ENCODE measurements at regions of chr2 and their contacts with region 1.

Region 1: GRCh38 chr2:68467077-68467960 is at the starts of genes APLF and FBXO48:
- DNase-seq: peak; percentile 98
- H3K4me3 ChIP-seq: peak within 1 kb of the TSS; percentile 76
- H3K27ac ChIP-seq: peak within 1 kb of the TSS; percentile 48
- H3K4me1 ChIP-seq: peaks cover 17% of the 10 kb centered on the region
- H3K27me3 ChIP-seq: no peaks in the 10 kb centered on the region
- CTCF ChIP-seq: no peak
- total RNA-seq, gene APLF: 3.9 and 4.5 TPM in 2 replicates
- total RNA-seq, gene FBXO48: 1.2 and 1.6 TPM in 2 replicates

Region 2: GRCh38 chr2:68698567-68699377 is 231.5 kb after region 1 on chr2:
- CTCF ChIA-PET with region 1: no interaction called
- POLR2A ChIA-PET with region 1: no interaction called
- intact Hi-C with region 1: no loop called
- DNase-seq: no peak
- H3K4me3 ChIP-seq: no peak overlapping the region
- H3K27ac ChIP-seq: no peak overlapping the region
- H3K4me1 ChIP-seq: no peaks in the 10 kb centered on the region
- H3K27me3 ChIP-seq: no peaks in the 10 kb centered on the region
- CTCF ChIP-seq: no peak

Region 3: GRCh38 chr2:68715353-68716041 is 248.2 kb after region 1 on chr2:
- CTCF ChIA-PET with region 1: no interaction called
- POLR2A ChIA-PET with region 1: no interaction called
- intact Hi-C with region 1: loop called (anchors 2 kb)
- DNase-seq: peak in 1 of 2 experiments; percentile 37
- H3K4me3 ChIP-seq: no peak overlapping the region
- H3K27ac ChIP-seq: no peak overlapping the region
- H3K4me1 ChIP-seq: no peaks in the 10 kb centered on the region
- H3K27me3 ChIP-seq: no peaks in the 10 kb centered on the region
- CTCF ChIP-seq: peak; percentile 69

Region 4: GRCh38 chr2:68751397-68752339 is 284.3 kb after region 1 on chr2:
- CTCF ChIA-PET with region 1: no interaction called
- POLR2A ChIA-PET with region 1: no interaction called
- intact Hi-C with region 1: loop called (anchors 1 kb)
- DNase-seq: peak; percentile 59 to 79
- H3K4me3 ChIP-seq: no peak overlapping the region
- H3K27ac ChIP-seq: no peak overlapping the region
- H3K4me1 ChIP-seq: no peaks in the 10 kb centered on the region
- H3K27me3 ChIP-seq: no peaks in the 10 kb centered on the region
- CTCF ChIP-seq: peak; percentile 85